Spleen (tissue), 13 donors: ENCODE measurements at regions of chr1 and their contacts with region 1.

Region 1: GRCh38 chr1:209576798-209577197 is 6.7 kb upstream of the CAMK1G start:
- DNase-seq: peak; percentile 85
- H3K4me3 ChIP-seq: no peak overlapping the region
- H3K27ac ChIP-seq: no peak overlapping the region
- H3K4me1 ChIP-seq: peaks cover 0 to 11% (median 0%) of the 10 kb centered on the region in 6 donors
- H3K27me3 ChIP-seq: peaks cover 0 to 65% (median 0%) of the 10 kb centered on the region in 7 donors
- CTCF ChIP-seq: peak; percentile 36 to 97 (median 87)
- POLR2A ChIP-seq: no peak

Region 2: DNA sequence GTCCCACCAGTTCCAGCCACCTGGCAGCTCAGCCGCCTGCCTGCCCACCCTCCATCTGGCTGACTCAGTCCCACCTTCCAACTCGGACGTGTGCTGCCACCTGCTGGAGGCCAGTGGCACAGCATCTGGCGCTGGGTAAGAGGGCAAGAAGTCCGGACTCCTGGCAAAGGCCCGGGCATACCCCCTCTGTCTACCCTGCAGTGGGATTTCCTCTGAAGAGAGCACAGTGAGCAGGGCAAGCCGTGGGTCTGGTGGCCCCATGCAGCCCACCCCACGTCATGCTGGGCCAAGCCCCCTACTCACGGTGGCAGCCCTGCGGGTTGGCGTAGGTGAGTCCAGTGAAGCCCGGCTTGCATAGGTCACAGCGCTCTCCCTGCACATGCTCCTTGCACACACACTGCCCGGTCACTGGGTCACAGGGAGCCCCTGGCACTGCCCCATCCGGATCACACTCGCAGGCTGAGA is 51.0 kb after region 1 on chr1:
- intact Hi-C with region 1: loop called (anchors 10 kb)
- DNase-seq: peak; percentile 92
- H3K4me3 ChIP-seq: no peak overlapping the region
- H3K27ac ChIP-seq: peak overlapping the region in 1 of 8 donors; percentile 56
- H3K4me1 ChIP-seq: peaks cover 4 to 38% (median 25%) of the 10 kb centered on the region in 6 donors
- H3K27me3 ChIP-seq: peaks cover 0 to 31% (median 5%) of the 10 kb centered on the region in 7 donors
- CTCF ChIP-seq: peak; percentile 73 to 98 (median 92)
- POLR2A ChIP-seq: no peak

Region 3: GRCh38 chr1:209651148-209651547 is 74.3 kb after region 1 on chr1:
- intact Hi-C with region 1: no loop called
- DNase-seq: peak; percentile 84
- H3K4me3 ChIP-seq: peak overlapping the region in 1 of 8 donors; percentile 8
- H3K27ac ChIP-seq: peak overlapping the region in 5 of 8 donors; percentile 29 to 80 (median 68)
- H3K4me1 ChIP-seq: peaks cover 0 to 66% (median 33%) of the 10 kb centered on the region in 6 donors
- H3K27me3 ChIP-seq: peaks cover 0 to 34% (median 5%) of the 10 kb centered on the region in 7 donors
- CTCF ChIP-seq: no peak
- POLR2A ChIP-seq: no peak

Region 4: DNA sequence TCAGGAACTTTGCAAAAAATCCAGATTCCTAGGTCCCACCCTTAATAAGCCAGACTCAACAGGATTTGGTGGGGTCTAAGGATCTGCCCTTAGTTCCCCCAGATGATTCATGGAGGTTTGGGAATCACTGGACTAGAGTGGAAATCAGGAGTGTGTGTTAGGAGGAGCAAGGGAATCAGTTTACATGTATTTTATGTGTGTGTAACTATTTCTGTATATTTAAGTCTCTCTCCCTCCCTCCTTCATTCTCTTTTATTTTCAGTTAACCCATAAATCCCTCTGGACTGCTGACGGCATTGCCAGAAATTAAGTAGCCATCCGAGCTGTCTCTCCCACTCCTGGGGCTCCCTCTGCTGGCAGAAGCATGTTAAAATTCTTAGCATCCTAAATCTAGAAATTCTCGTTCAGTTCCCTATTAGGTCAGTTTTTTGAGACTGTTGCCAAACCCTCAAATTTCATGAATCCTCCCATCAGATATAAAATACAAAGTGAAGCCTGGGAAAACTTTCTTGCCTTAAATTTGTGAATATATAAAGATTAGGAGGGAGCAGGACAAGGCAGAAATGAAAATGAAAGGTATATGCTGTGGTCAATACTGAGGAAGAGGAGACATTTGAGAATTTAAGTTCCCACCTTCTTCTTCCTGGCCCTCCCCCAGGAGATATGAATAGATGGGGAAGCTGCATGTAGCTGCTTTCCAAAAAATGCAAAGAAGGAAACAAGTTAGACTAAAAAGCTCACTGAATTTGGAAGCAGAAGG is 116.1 kb after region 1 on chr1:
- intact Hi-C with region 1: loop called (anchors 5 kb)
- DNase-seq: peak; percentile 82
- H3K4me3 ChIP-seq: no peak overlapping the region
- H3K27ac ChIP-seq: peak overlapping the region in 5 of 8 donors; percentile 26 to 48 (median 32)
- H3K4me1 ChIP-seq: peaks cover 0 to 20% (median 9%) of the 10 kb centered on the region in 6 donors
- H3K27me3 ChIP-seq: peaks cover 0 to 3% (median 0%) of the 10 kb centered on the region in 7 donors
- CTCF ChIP-seq: peak; percentile 49 to 88 (median 78)
- POLR2A ChIP-seq: no peak